ENCODE measurements at regions of chr21 and their contacts with region 1.

Region 1: GRCh38 chr21:39141502-39141901 is 41.7 kb downstream of the PSMG1 start:
- DNase-seq: no peak
- ATAC-seq: no peak
- H3K4me3 ChIP-seq: no peak overlapping the region
- H3K27ac ChIP-seq: no peak overlapping the region
- H3K4me1 ChIP-seq: peaks cover 0 to 3% (median 0%) of the 10 kb centered on the region in 4 donors
- H3K27me3 ChIP-seq: no peaks in the 10 kb centered on the region
- CTCF ChIP-seq: no peak
- POLR2A ChIP-seq: no peak

Region 2: DNA sequence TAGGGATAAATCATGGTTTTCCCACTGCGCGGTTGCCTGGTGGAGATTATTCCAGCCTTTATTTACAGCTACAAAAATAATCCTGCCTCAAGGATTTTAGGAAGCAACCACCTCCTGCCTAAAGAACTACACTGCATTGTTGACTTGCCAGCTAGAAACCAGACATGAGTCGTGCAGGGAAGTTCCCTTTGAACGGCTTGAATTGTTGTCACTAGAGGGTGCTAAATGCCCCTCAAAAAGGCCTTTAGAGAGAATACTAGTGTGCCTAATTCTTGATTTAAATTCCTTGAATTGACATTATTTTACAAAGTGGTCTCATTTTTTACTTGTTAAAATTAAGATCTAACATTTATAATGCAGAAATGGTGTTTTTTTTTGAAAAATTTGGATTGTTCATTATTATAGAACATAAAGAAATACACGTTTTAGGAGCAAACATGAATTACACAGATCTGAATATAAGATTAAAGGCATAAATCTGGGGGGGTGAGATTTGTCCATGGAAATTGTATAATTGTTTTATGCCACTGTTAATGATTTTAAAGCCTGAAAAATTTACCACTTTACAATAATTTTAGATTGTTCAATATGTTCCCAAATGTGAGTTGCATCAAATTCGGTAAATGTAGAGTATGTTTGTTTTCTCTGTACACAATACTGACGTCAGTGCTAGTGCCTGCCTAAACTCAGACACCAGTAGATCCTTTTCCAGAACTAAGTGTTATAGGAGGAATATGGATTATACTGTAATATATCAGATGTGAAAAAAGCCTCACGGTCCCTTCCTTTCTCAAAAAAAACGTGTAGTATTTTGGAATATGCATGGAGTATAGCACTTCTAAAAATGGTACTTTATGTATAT is 635.6 kb before region 1 on chr21:
- intact Hi-C with region 1: loop called in 1 of 2 experiments (anchors 10 kb)
- DNase-seq: no peak
- ATAC-seq: peak; percentile 92 to 97 (median 94)
- H3K4me3 ChIP-seq: no peak overlapping the region
- H3K27ac ChIP-seq: no peak overlapping the region
- H3K4me1 ChIP-seq: peaks cover 0 to 5% (median 0%) of the 10 kb centered on the region in 4 donors
- H3K27me3 ChIP-seq: no peaks in the 10 kb centered on the region
- CTCF ChIP-seq: peak; percentile 60 to 82 (median 76)
- POLR2A ChIP-seq: no peak

Region 3: DNA sequence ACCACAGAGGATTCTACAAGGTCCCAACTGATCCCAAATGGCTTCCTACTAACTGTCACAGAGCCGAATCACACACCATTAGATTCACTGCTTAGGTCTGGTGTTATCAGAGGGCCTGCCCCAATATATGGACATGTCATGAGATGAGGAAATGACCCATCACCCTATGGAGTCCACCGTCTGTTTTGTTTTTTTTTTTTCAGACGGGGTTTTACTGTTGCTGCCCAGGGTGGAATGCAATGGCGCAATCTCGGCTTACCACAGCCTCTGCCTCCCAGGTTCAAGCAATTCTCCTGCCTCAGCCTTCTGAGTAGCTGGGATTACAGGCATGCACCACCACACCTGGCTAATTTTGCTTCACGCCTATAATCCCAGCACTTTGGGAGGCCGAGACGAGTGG is 419.5 kb before region 1 on chr21:
- intact Hi-C with region 1: loop called in 1 of 2 experiments (anchors 10 kb)
- DNase-seq: no peak
- ATAC-seq: no peak
- H3K4me3 ChIP-seq: no peak overlapping the region
- H3K27ac ChIP-seq: no peak overlapping the region
- H3K4me1 ChIP-seq: no peaks in the 10 kb centered on the region
- H3K27me3 ChIP-seq: no peaks in the 10 kb centered on the region
- CTCF ChIP-seq: no peak
- POLR2A ChIP-seq: no peak

Measured in right lobe of liver (tissue), 6 donors.